IMR-90 (cell line): ENCODE measurements at regions of chr2 and their contacts with region 1.

Region 1: DNA sequence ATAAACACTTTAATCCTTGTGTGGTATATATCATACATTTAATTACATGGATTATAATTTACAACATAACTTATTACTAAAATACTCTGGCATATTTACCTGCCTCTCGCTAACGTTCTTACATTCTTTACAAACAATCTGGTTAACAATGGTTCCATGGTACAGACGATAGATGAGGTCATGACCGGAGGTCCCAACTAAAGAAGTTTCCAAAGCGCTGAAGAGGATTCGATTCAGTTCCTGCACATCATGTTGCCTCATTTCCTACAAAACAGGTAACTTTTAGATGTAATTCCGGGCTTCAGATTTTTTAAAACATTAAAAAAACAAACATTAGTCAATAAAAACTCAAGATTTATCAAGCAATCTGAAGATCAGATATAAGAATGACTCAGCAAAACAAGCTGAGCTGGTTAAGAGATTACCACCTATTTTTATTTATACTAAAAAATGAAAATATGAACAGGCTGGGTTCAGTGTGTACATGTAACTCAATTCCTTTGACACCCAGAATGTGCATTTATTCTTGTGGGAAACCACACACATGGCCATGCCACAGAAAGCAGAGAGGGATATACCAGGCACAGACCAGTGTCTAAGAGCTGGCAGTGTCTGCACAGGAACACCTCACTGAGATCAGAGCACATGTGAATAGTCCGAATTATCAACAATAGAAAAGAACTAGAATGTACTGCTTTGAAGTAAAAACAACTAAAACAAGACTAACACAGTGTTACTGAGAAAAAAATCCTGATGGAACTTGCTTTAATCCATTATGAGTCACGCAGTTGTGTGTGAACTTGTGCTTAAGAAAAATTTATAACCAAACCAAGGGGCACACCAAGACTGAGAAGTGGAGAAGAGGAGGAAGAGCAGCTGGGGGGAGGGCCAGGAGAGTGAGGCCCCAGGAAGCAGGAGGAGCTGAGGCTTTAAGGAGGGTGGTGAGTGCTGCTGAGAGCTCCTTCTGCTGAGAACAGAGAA is 9.5 kb downstream of the USP40 start:
- DNase-seq: peak; percentile 79
- ATAC-seq: peak; percentile 94
- H3K4me3 ChIP-seq: no peak overlapping the region
- H3K27ac ChIP-seq: peak overlapping the region; percentile 83; the same call in 1 of the 2 replicates
- H3K4me1 ChIP-seq: peaks cover 12% of the 10 kb centered on the region
- H3K27me3 ChIP-seq: no peaks in the 10 kb centered on the region
- CTCF ChIP-seq: no peak
- POLR2A ChIP-seq: no peak
- RAD21 ChIP-seq: no peak

Region 2: GRCh38 chr2:233486778-233487552 is 70.1 kb before region 1 on chr2:
- CTCF ChIA-PET with region 1: no interaction called
- POLR2A ChIA-PET with region 1: interaction called, 10 read pairs
- dilution Hi-C with region 1: no loop called
- in situ Hi-C with region 1: no loop called
- intact Hi-C with region 1: no loop called
- DNase-seq: peak; percentile 94
- ATAC-seq: peak; percentile 70
- H3K4me3 ChIP-seq: no peak overlapping the region
- H3K27ac ChIP-seq: peak overlapping the region; percentile 42
- H3K4me1 ChIP-seq: peaks cover 20% of the 10 kb centered on the region
- H3K27me3 ChIP-seq: no peaks in the 10 kb centered on the region
- CTCF ChIP-seq: no peak
- POLR2A ChIP-seq: no peak
- RAD21 ChIP-seq: no peak